ENCODE measurements at regions of chr2 and their contacts with region 1.

Region 1: DNA sequence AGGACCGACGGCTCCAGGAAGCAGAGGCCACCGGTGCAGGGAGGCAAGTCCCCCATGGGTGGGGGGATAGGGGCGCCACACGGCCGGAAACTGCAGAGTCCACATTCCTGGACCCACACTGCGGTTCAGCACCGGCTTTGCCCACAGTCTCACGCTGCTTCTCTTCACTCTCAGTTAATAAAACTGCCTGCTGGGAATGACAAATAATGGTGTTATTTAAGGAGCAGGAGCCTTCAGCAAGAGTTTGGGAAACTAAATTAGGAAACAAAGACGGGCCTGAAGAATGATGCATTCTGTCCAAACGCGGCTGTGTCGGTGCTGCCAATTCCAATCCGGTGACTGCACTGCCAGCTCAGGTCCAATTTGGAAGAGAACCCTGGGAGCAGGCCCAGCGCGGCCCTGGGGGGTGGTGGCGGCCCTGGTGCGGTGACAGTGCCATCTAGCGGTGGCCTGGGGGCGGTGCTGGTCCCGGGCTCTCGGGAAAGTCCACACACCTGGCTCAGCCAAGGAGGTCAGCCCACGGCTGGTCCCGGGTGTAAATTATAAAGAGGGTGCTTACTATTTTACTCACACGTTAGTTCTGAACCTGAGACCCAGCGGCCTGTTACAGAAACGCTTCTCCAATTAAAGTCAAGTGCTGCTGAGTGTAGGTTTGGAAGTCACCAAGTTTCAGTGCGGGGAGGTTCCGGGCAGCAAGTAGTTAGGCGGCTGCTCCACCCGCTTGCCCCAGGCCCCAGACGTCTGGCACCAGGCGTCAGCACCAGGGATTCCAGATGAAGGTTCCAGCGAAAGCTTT is 73.1 kb upstream of the PXDN start:
- DNase-seq: peak; percentile 38 to 96
- H3K4me3 ChIP-seq: no peak overlapping the region
- H3K27ac ChIP-seq: no peak overlapping the region
- H3K4me1 ChIP-seq: peaks cover 0 to 2% (median 1%) of the 10 kb centered on the region in 4 experiments; a peak in 2 of 7 replicates
- H3K27me3 ChIP-seq: no peaks in the 10 kb centered on the region
- CTCF ChIP-seq: peak; percentile 89 to 91 (median 91)
- EP300 ChIP-seq: 0 out of 3 replicates have a peak, but pooled peaks of 1 of the 2 experiments have one; percentile 62
- POLR2A ChIP-seq: no peak
- RAD21 ChIP-seq: peak; percentile 87 to 93

Region 2: DNA sequence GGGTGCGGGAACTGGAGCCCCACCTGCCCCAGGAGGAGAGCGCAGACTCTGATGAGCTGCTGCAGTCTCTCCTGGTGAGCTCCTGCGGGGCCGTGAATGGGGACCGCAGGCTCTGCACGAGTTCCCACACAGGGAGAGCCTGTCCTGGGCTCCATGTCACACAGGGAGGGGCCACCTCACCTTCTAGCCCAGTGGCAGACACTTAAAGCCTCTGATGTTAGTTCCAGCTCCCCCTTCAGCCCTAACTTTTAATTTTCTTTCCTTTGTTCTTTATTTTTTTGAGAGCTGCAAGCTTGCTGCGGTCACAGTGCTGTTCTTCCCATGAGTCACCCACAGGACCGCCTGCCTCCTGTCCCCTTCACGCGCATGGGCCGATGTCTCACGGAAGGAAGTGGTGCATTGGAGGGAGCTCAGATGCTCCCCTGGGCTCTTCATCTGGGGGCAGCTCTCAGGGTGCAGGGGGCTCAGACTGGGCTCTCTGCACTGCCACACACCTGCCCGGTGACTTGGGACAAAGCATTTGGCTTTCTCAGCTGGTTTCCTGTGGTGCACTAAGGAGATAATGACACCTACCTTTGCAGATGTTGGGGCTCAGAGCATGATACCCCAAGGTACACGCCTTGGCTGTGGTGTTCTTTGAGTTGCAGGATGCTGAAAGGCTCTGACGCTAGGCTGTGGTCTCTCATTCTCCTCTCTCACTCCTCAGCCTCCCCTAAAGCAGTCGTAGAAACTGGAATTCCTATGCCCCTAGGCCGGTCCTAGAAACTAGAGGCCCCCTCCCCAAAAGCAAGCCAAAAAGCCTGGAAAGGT is 36.0 kb before region 1 on chr2:
- CTCF ChIA-PET with region 1: interaction called, 22 read pairs
- POLR2A ChIA-PET with region 1: interaction called, 4 read pairs
- DNase-seq: no peak
- H3K4me3 ChIP-seq: no peak overlapping the region
- H3K27ac ChIP-seq: no peak overlapping the region
- H3K4me1 ChIP-seq: no peaks in the 10 kb centered on the region; a peak in 1 of 7 replicates
- H3K27me3 ChIP-seq: no peaks in the 10 kb centered on the region
- CTCF ChIP-seq: no peak
- EP300 ChIP-seq: no peak
- POLR2A ChIP-seq: no peak
- RAD21 ChIP-seq: no peak

Region 3: DNA sequence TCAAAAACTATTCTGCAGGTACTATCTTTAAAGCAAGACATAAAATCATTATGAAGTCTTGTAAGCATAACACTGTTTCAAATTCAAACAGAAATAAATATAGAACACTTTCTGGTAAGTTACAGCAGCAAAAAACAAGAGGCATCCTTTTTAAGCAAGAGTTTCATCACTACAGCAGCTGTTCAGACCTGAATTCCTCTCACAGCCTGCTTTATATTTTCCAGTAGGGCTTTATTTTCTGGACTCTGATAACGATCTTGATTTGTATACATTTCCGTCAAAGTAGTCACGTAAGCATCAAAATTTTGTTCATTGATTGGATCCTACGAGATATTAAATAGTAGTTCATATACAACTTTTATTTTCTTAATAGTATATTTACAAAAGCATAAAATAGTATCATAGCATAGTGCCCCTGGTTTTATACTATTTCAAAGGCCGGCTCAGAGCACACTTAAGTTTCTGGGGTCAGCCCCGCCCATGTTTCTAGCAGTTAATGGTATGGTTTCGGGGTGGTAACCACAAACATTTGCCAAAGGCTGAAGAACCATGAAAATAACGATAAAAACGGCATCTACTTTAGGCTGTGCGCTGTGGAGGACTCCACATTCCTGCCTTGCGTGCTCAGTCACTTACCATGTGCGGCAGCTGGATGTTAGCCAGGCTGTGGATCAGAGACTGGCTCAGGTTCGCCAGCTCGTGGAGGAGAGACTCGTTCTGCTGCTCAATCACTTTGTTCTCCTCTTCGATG is 25.6 kb before region 1 on chr2:
- CTCF ChIA-PET with region 1: interaction called, 12 read pairs
- POLR2A ChIA-PET with region 1: no interaction called
- DNase-seq: no peak
- H3K4me3 ChIP-seq: no peak overlapping the region
- H3K27ac ChIP-seq: no peak overlapping the region
- H3K4me1 ChIP-seq: peaks cover 3 to 5% (median 5%) of the 10 kb centered on the region in 4 experiments; a peak in 5 of 7 replicates
- H3K27me3 ChIP-seq: no peaks in the 10 kb centered on the region
- CTCF ChIP-seq: no peak
- EP300 ChIP-seq: no peak
- POLR2A ChIP-seq: no peak
- RAD21 ChIP-seq: no peak